Activated CD8-positive, alpha-beta memory T cell treated with anti-CD3 and anti-CD28 coated beads, Interleukin-2, amount 10 ng/mL, durations not matched to agents 7 days and 5 days (primary cell): ENCODE measurements at regions of chr9 and their contacts with region 1.

Region 1: GRCh38 chr9:33374634-33375213 is 27.6 kb downstream of the AQP7 start:
- DNase-seq: peak; percentile 78
- ATAC-seq: peak; percentile 81
- H3K4me3 Mint-ChIP-seq: no peak overlapping the region
- H3K27ac Mint-ChIP-seq: no peak overlapping the region
- H3K4me1 Mint-ChIP-seq: peaks cover 10% of the 10 kb centered on the region
- H3K27me3 Mint-ChIP-seq: no peaks in the 10 kb centered on the region

Region 2: DNA sequence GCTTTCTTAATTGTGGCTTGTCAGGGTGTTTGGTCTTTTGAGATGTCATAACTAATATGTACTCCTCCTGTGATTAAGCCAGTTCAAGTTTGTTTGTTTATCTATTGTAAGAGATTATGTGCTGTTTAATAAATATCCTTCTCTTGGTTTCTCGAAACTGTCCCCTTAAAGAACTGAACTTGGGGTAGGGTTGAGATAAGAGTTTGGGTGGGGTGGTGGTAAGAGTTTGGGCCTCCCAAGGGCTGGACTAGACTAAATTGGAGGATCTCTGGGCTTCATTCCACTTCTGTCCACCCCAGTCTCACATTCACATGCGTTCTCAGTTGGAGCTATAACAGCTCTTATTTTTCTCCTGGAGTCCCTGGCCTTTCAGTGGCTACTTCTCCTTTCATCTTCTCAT is 10.6 kb before region 1 on chr9:
- CTCF ChIA-PET with region 1: interaction called, 11 read pairs
- DNase-seq: no peak
- ATAC-seq: no peak
- H3K4me3 Mint-ChIP-seq: no peak overlapping the region
- H3K27ac Mint-ChIP-seq: no peak overlapping the region
- H3K4me1 Mint-ChIP-seq: no peaks in the 10 kb centered on the region
- H3K27me3 Mint-ChIP-seq: no peaks in the 10 kb centered on the region

Region 3: DNA sequence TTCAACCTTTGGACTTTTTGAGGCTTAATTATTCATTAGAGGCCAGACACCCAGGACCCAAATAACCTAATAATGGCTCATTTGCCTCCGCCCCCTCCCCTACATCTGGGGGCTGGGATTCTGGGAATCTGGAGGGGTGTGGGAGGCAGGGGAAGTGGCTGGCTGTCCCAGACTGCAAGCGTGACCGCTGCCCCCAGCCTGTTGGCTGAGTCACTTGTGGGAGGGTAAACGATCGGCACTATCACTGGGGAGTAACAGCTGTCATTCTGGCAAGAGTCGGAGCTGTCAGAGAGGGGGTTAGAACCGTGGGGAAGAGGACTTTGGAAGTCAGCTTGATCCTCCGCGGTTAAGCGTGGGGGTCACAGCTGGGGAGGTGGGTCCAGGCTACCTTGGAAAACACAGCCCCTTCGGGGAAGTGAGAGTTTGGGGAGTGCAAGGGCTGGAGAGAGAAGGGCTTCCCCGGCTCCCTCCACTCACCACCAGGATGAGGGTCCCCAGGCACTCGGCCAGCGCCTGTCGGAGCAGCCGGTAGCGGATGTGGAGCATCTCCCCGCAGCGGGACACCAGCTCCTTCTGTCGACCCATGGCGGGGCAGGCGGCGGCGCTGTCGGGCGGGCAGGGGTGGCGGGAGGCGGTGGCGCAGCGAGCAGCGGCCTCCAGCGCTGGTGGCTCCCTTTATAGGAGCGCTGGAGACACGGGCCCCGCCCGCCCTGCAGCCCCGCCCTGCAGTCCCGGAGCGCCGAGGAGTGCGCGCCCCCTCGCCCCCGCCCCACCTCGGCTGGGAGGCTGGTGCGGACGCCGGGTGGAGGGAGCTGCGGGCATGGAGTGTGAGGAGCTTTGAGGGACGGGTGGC is 72.4 kb after region 1 on chr9 and contains the start of gene AQP3:
- CTCF ChIA-PET with region 1: interaction called, 20 read pairs
- DNase-seq: peak; percentile 84
- ATAC-seq: peak; percentile 71
- H3K4me3 Mint-ChIP-seq: peak within 1 kb of the TSS; percentile 78
- H3K27ac Mint-ChIP-seq: peak within 1 kb of the TSS; percentile 88
- H3K4me1 Mint-ChIP-seq: peaks cover 38% of the 10 kb centered on the region
- H3K27me3 Mint-ChIP-seq: no peaks in the 10 kb centered on the region
- total RNA-seq, gene AQP3: 2.8 to 10.4 TPM

Region 4: DNA sequence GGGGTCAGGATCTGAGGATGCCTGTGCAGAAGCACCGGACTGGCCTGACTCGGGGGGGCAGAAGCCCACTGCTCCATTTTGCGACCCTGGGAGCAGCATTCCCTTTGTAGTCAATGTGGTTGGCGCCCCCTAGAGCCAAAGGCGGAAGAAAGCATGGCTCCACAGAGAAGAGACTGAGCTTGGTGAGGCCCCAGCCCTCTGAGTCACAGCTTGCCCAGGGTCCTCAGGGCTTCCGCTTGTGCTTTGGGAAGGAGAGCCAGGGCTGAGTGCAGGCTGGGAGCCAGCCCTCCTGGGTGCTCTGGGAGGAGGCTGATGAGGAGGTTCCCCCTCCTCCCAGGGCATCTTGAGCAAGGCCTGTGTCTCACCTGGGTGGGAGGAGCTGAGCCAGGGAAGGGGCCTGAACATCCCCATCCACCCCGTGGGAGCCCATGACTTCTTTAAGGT is 78.1 kb after region 1 on chr9:
- CTCF ChIA-PET with region 1: interaction called, 20 read pairs
- DNase-seq: peak; percentile 74
- ATAC-seq: peak; percentile 84
- H3K4me3 Mint-ChIP-seq: no peak overlapping the region
- H3K27ac Mint-ChIP-seq: peak overlapping the region; percentile 76
- H3K4me1 Mint-ChIP-seq: peaks cover 54% of the 10 kb centered on the region
- H3K27me3 Mint-ChIP-seq: no peaks in the 10 kb centered on the region

Region 5: GRCh38 chr9:33466565-33467495 is 92.1 kb after region 1 on chr9:
- CTCF ChIA-PET with region 1: interaction called, 78 read pairs
- DNase-seq: peak; percentile 78
- ATAC-seq: peak; percentile 81
- H3K4me3 Mint-ChIP-seq: no peak overlapping the region
- H3K27ac Mint-ChIP-seq: no peak overlapping the region
- H3K4me1 Mint-ChIP-seq: peaks cover 8% of the 10 kb centered on the region
- H3K27me3 Mint-ChIP-seq: no peaks in the 10 kb centered on the region

Region 6: DNA sequence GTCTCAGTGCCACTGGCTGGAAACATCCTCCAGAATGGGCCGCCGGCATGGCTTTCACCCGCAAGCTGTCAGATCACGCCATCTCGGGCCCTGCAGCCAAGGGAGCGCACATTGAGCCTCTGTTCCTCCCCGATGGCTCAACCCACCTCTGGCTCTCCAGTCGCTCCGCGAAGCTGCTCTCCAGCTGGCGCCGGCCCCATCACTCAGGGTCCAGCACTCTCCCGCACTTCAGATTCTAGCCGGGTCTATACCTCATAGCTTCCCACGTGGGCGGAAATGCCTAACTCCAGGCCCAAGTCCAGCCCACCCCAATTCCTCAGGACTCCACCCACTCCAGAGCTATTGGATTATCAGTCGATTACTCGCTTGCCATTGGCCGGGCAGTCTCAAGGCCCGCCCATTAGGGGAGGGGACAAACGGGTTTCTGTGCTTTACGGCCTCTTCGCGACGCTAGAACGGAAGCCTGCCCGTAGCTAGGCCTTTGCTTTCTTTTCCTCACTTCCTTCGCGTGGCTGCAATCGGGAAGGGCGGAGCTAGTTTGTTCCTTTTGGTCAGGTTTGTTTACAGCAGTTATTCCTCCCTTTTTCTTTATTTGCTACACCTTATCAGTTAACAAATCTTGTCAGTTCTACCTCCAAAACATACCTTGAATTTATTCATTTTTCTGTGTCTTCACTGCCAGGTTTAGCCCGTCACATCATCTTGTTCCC is 99.1 kb after region 1 on chr9 and contains the start of gene NOL6:
- CTCF ChIA-PET with region 1: interaction called, 18 read pairs
- DNase-seq: peak; percentile 99
- ATAC-seq: peak; percentile 100
- H3K4me3 Mint-ChIP-seq: peak within 1 kb of the TSS; percentile 98
- H3K27ac Mint-ChIP-seq: peak within 1 kb of the TSS; percentile 91
- H3K4me1 Mint-ChIP-seq: peaks cover 30% of the 10 kb centered on the region
- H3K27me3 Mint-ChIP-seq: no peaks in the 10 kb centered on the region
- total RNA-seq, gene NOL6: 34.3 to 43.1 TPM